ENCODE measurements at regions of chr11 and their contacts with region 1.

Region 1: DNA sequence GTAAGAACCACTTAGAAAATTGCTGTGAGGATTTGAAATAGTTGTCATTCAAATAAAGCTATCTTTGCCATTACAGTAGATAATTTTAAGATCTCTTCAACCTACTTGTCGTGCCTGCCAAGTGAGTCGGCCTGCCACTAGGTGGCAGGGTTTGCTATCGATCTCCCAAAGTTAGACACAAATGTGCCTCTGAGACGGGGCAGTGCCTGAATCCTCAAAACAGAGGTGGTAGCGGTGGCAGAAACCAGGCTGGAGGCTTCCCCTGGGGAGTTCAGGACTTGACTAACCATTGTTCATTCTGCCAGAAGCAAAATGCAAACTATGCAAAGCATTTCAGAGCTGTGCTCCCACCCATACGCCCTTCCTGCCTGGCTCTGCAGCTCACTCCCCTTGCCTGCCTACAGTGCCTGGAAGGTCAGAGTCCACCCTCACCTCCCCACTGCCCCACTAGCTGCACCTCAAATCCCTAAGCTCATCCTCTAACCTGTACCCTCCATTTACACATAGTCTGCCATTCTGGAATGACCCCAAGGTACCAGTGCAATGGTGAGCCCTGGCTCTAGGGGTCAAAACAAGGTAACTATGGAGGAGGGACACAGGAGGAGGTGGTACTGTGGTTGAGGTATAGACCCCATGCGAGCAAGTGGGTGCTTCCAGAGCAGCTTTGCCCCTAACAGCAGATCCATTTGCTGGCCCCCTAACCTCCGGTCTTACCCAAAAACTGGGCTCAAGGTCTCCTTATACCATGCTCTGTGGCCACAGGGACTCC is 82.1 kb downstream of the C11orf58 start:
- DNase-seq: peak; percentile 23
- ATAC-seq: peak; percentile 91
- H3K4me3 Mint-ChIP-seq: no peak overlapping the region
- H3K27ac Mint-ChIP-seq: peak overlapping the region; percentile 7
- H3K4me1 Mint-ChIP-seq: peaks cover 6% of the 10 kb centered on the region
- H3K27me3 Mint-ChIP-seq: no peaks in the 10 kb centered on the region
- CTCF ChIP-seq: peak; percentile 41

Region 2: DNA sequence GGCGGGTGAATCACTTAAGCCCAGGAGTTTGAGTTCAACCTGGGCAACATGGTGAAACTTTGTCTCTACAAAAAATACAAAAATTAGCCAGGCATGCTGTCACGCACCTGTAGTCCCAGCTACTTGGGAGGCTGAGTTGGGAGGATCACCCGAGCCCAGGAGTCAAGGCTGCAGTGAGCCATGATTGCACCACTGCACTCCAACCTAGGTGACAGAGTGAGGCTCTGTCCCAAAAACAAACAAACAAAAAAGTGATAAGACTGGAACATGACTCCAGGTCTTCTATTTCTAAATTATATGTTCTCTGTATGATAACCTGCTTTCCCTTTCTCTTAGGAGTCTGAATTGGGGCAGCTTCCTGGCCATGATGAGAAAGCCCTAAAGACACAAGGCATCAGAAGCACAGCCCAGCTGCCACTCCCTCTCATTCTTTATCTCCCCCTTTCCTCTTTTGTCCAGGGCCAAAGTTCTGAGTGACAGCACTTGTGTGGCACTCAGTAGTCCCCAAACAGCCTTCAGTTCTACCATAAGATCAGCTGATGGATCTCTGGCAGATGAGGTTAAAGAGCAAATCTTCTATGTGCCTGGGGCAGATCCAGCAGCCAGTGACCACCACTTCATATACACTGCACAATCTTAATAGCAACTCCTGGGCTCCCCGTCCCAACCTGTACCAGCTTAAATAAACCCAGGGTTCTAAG is 53.9 kb after region 1 on chr11:
- CTCF ChIA-PET with region 1: no interaction called
- POLR2A ChIA-PET with region 1: interaction called, 11 read pairs
- intact Hi-C with region 1: no loop called
- DNase-seq: no peak
- ATAC-seq: no peak
- H3K4me3 Mint-ChIP-seq: no peak overlapping the region
- H3K27ac Mint-ChIP-seq: no peak overlapping the region
- H3K4me1 Mint-ChIP-seq: no peaks in the 10 kb centered on the region
- H3K27me3 Mint-ChIP-seq: peaks cover 2% of the 10 kb centered on the region
- CTCF ChIP-seq: no peak

Region 3: GRCh38 chr11:16924826-16925560 is 104.5 kb after region 1 on chr11:
- CTCF ChIA-PET with region 1: no interaction called
- POLR2A ChIA-PET with region 1: no interaction called
- intact Hi-C with region 1: loop called (anchors 1 kb)
- DNase-seq: no peak
- ATAC-seq: peak; percentile 16
- H3K4me3 Mint-ChIP-seq: peak overlapping the region; percentile 82
- H3K27ac Mint-ChIP-seq: peak overlapping the region; percentile 62
- H3K4me1 Mint-ChIP-seq: peaks cover 28% of the 10 kb centered on the region
- H3K27me3 Mint-ChIP-seq: peaks cover 18% of the 10 kb centered on the region
- CTCF ChIP-seq: no peak

Region 4: GRCh38 chr11:17014838-17015626 is 194.5 kb after region 1 on chr11:
- CTCF ChIA-PET with region 1: no interaction called
- POLR2A ChIA-PET with region 1: no interaction called
- intact Hi-C with region 1: loop called (anchors 1 kb)
- DNase-seq: no peak
- ATAC-seq: peak; percentile 47
- H3K4me3 Mint-ChIP-seq: peak overlapping the region; percentile 89
- H3K27ac Mint-ChIP-seq: peak overlapping the region; percentile 27
- H3K4me1 Mint-ChIP-seq: peaks cover 8% of the 10 kb centered on the region
- H3K27me3 Mint-ChIP-seq: peaks cover 16% of the 10 kb centered on the region
- CTCF ChIP-seq: no peak

Region 5: GRCh38 chr11:17389211-17389956 is 568.9 kb after region 1 on chr11:
- CTCF ChIA-PET with region 1: no interaction called
- POLR2A ChIA-PET with region 1: no interaction called
- intact Hi-C with region 1: loop called (anchors 5 kb)
- DNase-seq: peak; percentile 85
- ATAC-seq: peak; percentile 90
- H3K4me3 Mint-ChIP-seq: peak overlapping the region; percentile 84
- H3K27ac Mint-ChIP-seq: peak overlapping the region; percentile 59
- H3K4me1 Mint-ChIP-seq: peaks cover 18% of the 10 kb centered on the region
- H3K27me3 Mint-ChIP-seq: no peaks in the 10 kb centered on the region
- CTCF ChIP-seq: no peak

Measured in activated B cell treated with CpG ODN at 0.5 μM for 24 hours (primary cell).